Activated CD4-positive, alpha-beta T cell treated with anti-CD3 and anti-CD28 coated beads for 36 hours (primary cell): ENCODE measurements at regions of chr10 and their contacts with region 1.

Region 1: GRCh38 chr10:35259769-35260397 is 76.4 kb upstream of the CCNY start:
- DNase-seq: peak; percentile 23
- ATAC-seq: peak; percentile 94
- H3K4me3 Mint-ChIP-seq: no peak overlapping the region
- H3K27ac Mint-ChIP-seq: no peak overlapping the region
- H3K4me1 Mint-ChIP-seq: peaks cover 3% of the 10 kb centered on the region
- H3K27me3 Mint-ChIP-seq: peaks cover 10% of the 10 kb centered on the region

Region 2: DNA sequence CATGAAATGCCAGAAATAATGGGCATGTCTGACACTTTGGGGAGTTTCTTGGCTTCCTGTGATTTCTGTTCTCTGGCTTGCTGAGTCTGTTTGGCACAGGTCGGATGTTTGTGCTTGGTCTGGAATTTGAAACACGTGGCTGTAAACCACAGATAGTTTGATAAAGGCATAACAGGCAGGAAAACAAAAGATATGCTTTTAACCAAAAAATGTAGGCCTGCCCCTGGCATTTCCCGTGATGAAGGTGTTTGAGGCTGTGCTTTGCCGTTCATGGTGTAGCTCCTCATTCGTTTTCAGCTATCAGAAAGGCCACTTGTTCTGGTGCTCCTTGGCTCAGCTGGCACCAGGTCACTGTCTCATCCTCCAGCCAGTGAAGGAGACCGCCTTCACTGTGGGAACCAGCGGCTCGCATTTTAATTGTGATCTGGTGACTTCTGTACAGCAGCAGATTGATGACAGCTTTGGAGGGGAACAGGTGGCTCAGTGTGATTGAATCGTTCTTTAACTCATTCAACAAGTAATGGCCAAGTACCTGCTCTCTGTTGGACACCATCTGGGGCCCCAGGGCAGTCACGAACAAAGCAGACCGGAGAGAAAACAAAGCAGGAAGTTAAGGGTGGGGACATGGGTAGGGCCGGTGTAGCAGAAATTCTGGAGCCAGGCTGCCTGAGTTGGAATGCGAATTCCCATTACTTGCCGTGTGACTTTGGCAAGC is 188.0 kb after region 1 on chr10:
- CTCF ChIA-PET with region 1: no interaction called
- POLR2A ChIA-PET with region 1: no interaction called
- intact Hi-C with region 1: loop called in 1 of 2 experiments (anchors 5 kb)
- DNase-seq: peak; percentile 33
- ATAC-seq: peak; percentile 23
- H3K4me3 Mint-ChIP-seq: peak overlapping the region; percentile 37
- H3K27ac Mint-ChIP-seq: peak overlapping the region; percentile 90
- H3K4me1 Mint-ChIP-seq: peaks cover 79% of the 10 kb centered on the region
- H3K27me3 Mint-ChIP-seq: no peaks in the 10 kb centered on the region